T-cell (primary cell): ENCODE measurements at regions of chrX and their contacts with region 1.

Region 1: DNA sequence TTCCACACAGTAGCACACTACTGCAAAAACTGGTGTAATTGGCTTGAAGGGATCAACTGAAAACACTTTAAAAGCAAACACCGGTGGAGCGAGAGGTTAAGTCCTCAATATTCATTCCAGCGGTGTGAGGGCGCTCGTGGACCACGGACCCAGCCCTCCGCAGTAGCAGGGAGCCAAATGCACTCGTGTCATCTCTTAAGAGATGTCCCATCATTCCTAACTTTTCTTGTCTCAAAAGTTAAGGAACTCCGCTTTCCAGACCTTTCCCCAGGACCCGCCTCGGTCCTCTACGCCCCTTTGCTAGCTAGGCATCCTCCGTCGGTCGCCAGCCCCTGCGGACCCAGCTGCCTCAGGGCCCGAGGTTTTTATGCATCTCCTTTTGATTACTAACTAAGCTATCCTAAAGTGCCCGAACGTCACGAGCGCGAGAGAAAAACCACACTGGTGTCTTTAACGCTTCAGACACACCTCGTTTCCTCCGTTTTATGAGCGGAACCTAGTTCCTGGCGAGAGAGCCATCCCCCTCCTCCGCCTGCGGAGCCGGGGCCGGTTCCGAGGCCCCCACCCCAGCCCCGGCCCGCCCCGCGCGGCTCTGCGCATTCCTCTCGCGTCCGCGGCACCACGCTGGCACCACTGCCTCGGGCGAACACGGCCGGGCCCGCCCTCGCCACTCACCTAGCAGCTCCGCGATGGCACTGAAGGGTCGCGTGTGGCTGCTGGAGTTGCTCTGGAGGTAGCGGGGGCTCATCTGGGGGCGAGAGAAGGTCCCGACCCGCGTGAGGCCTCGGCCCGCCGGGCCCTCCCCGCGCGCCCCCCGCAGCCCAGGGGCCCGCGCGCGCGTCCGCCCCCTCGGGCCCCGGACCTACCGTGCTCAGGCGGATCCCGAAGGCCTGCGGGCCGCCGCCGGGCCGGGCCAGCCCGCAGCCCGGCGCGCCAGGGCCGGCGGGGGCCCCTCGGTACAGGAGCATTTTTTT is 723 bp downstream of the MORC4 start:
- DNase-seq: peak in 33 of 35 experiments; percentile 4 to 61 (median 30)
- ATAC-seq: peak; percentile 61 to 72 (median 64)
- H3K4me3 ChIP-seq: peak overlapping the region; percentile 48 to 67
- H3K4me3 Mint-ChIP-seq: peak overlapping the region; percentile 69 to 86 (median 85)
- H3K27ac ChIP-seq: no peak overlapping the region
- H3K27ac Mint-ChIP-seq: peak overlapping the region; percentile 24 to 76
- H3K4me1 ChIP-seq: no peaks in the 10 kb centered on the region
- H3K4me1 Mint-ChIP-seq: peaks cover 7 to 19% (median 11%) of the 10 kb centered on the region in 3 donors
- H3K27me3 ChIP-seq: no peaks in the 10 kb centered on the region
- H3K27me3 Mint-ChIP-seq: peaks cover 0 to 17% of the 10 kb centered on the region in 2 donors

Region 2: GRCh38 chrX:107014936-107015335 is 15.6 kb after region 1 on chrX:
- CTCF ChIA-PET with region 1: no interaction called
- POLR2A ChIA-PET with region 1: no interaction called
- DNase-seq: no peak
- ATAC-seq: no peak
- H3K4me3 ChIP-seq: no peak overlapping the region
- H3K4me3 Mint-ChIP-seq: no peak overlapping the region
- H3K27ac ChIP-seq: no peak overlapping the region
- H3K27ac Mint-ChIP-seq: no peak overlapping the region
- H3K4me1 ChIP-seq: no peaks in the 10 kb centered on the region
- H3K4me1 Mint-ChIP-seq: no peaks in the 10 kb centered on the region
- H3K27me3 ChIP-seq: no peaks in the 10 kb centered on the region
- H3K27me3 Mint-ChIP-seq: peaks cover 0 to 6% of the 10 kb centered on the region in 2 donors

Region 3: GRCh38 chrX:107205770-107206696 is 206.7 kb after region 1 on chrX and contains the starts of genes DNAAF6 and NUP62CL:
- CTCF ChIA-PET with region 1: no interaction called
- POLR2A ChIA-PET with region 1: no interaction called
- DNase-seq: peak; percentile 25 to 76 (median 53)
- ATAC-seq: peak; percentile 85 to 97 (median 91)
- H3K4me3 ChIP-seq: peak within 1 kb of the TSS; percentile 66 to 71
- H3K4me3 Mint-ChIP-seq: peak within 1 kb of the TSS; percentile 86 to 87 (median 86)
- H3K27ac ChIP-seq: no peak within 1 kb of the TSS
- H3K27ac Mint-ChIP-seq: peak within 1 kb of the TSS in 1 of 2 donors; percentile 48
- H3K4me1 ChIP-seq: peaks cover 0 to 11% of the 10 kb centered on the region in 2 experiments
- H3K4me1 Mint-ChIP-seq: peaks cover 0 to 7% (median 3%) of the 10 kb centered on the region in 3 donors
- H3K27me3 ChIP-seq: peaks cover 0 to 5% of the 10 kb centered on the region in 2 experiments
- H3K27me3 Mint-ChIP-seq: peaks cover 0 to 8% of the 10 kb centered on the region in 2 donors
- total RNA-seq, gene DNAAF6: not detected
- total RNA-seq, gene NUP62CL: 0.26 to 4.0 (median 3.7) TPM

Region 4: DNA sequence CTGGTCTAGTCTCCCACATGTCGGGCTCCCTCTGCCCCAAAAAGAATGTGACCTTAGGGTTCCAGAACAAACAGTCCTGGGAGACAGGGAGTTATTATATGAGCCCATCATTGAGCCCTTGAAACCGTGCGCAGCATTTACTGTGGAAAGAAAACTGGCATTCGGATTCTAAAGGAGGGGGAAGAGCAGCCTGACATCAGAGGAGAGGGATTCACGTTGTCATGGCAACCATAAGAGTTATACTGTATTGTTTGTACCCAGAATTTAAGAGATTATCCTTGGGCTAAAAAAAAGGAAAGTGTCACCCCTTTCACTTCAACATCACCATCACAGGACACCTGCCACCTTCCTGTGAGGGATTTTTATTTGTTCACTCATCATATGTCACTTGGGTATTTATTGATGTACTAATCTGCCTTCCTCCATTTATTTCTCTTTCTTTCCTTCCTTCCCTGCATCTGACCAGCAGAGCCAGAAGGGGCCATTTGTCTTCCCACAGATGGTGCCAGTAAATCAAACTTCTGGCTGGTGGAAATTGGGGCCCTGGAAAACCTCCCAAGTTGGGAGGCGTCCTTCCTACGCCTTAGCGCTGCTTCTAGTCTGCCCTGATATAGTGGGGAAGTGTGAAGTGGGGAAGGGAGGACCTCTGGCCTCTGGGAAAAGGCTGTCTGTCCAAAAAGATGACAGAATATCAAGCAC is 385.3 kb after region 1 on chrX:
- CTCF ChIA-PET with region 1: no interaction called
- POLR2A ChIA-PET with region 1: no interaction called
- DNase-seq: no peak
- ATAC-seq: no peak
- H3K4me3 ChIP-seq: no peak overlapping the region
- H3K4me3 Mint-ChIP-seq: no peak overlapping the region
- H3K27ac ChIP-seq: no peak overlapping the region
- H3K27ac Mint-ChIP-seq: no peak overlapping the region
- H3K4me1 ChIP-seq: no peaks in the 10 kb centered on the region
- H3K4me1 Mint-ChIP-seq: peaks cover 0 to 8% (median 7%) of the 10 kb centered on the region in 3 donors
- H3K27me3 ChIP-seq: no peaks in the 10 kb centered on the region
- H3K27me3 Mint-ChIP-seq: peaks cover 14 to 65% of the 10 kb centered on the region in 2 donors

Region 5: DNA sequence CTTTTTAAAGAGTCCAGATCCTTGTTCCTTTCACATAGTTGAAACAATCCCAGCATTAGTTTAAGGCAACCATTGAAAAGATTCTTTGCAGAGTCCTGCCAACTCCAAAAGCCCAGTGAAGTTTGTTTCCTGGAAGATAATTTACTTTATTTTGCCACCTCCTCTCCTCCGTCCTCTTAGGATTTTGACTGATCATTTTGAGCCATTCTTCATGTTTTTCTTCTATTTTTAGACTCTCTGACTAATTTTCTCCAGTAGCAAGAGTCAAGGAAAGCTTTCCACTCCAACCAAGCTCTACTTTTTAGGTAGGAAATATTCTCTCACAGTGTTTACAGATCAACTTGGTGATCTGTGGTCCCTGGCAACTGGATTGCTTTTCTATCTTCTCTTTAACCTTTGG is 788.5 kb after region 1 on chrX:
- CTCF ChIA-PET with region 1: no interaction called
- POLR2A ChIA-PET with region 1: interaction called in 1 of 2 experiments, 10 read pairs
- DNase-seq: no peak
- ATAC-seq: no peak
- H3K4me3 ChIP-seq: no peak overlapping the region
- H3K4me3 Mint-ChIP-seq: no peak overlapping the region
- H3K27ac ChIP-seq: no peak overlapping the region
- H3K27ac Mint-ChIP-seq: no peak overlapping the region
- H3K4me1 ChIP-seq: no peaks in the 10 kb centered on the region
- H3K4me1 Mint-ChIP-seq: no peaks in the 10 kb centered on the region
- H3K27me3 ChIP-seq: peaks cover 0 to 2% of the 10 kb centered on the region in 2 experiments
- H3K27me3 Mint-ChIP-seq: peaks cover 4 to 19% of the 10 kb centered on the region in 2 donors